GM10248 (cell line): ENCODE measurements at regions of chr3 and their contacts with region 1.

Region 1: DNA sequence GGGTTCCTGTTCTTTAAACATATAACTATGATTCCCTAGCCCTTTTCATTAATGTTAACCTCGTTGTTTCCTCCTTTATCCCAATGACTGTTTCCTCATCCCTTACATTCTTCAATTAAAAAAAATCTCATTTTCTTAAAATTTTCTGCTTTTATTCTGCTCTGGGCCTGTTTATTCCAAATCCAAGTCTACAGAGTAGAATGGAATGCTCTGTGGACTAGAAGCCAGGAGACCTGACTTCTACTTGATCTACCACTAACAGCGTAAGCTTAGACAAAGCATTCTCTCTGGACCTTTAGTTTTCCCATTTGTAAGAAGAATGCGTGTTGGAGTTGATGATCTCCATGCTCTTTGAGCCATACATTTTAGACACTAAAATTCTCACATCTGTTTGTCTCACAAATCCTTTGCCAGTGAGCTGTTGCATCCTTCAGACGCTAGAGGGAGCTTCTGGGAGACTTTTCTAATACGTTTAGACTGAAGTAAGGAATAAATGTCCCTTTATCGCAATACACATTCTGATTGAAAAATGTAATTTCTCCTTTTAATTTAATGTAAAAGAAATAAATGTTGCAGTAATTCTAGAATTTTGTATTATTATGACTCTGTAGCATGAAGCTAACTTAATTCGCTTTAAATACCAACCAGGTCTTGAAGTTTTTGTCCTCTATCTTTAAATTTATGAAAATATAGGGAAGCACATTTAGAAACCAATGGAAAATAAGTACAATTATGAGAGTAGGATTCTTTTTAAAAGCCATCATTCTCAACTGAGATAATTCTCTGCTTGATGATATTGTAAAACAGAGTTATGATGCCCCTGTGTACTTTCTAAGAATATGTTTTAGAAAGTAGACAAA is 21.7 kb upstream of the GMNC start:
- DNase-seq: peak; percentile 40
- CTCF ChIP-seq: peak; percentile 88

Region 2: DNA sequence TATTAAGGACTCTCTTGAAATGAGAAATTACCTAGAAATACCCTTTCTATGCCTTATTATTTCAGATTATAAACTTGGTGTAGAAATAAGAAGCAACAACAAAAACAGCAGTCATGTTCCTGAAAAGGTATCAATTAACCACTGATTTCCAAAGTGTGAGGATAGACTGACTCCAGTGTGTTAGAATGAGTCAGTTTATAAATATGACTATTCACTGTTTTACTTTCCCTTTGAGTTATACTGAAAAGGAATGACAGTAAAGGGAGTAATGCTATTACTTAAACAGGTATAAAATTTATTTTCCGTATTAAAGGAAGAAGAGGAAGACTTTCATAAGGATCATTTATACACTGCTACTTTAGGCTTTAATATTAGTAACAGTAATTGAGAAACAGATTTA is 34.6 kb before region 1 on chr3:
- CTCF ChIA-PET with region 1: no interaction called
- POLR2A ChIA-PET with region 1: no interaction called
- DNase-seq: no peak
- CTCF ChIP-seq: no peak

Region 3: DNA sequence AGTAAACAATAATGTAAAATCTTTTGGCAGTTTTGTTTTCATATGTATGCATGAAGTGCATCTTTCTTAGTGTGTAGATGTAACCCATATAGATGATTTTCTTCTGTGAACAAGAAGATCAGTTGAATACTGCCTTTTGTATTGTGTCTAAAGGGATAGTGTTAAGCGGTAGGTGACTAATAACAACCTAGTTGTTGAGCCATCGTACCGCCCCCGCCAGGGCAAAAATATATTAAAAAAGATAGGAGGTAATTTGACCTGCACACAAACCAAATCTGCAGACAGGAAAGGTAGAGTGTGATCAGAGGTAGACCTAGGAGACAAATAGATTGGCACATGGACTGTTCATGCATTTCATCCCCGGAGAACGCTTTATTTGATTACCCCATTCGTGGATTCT is 18.4 kb before region 1 on chr3:
- CTCF ChIA-PET with region 1: interaction called, 13 read pairs
- POLR2A ChIA-PET with region 1: no interaction called
- DNase-seq: no peak
- CTCF ChIP-seq: no peak

Region 4: DNA sequence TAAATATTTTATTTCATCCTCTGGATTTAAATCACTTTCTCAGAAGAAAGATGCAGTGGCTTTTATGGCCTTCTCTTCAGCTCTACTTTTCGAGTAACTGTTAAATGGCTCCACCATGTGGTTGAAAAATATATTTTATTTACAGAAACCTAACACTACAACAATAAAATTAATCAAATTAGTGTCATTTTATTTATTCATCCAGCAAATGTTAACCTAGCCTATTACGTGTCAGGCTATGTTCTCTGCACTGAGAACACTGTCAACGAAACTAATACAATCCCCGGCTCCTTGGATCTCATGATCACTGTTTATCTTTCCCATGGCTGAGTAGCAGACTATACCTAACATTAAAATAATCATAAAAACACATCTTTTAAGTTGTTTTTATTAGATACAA is 166.8 kb after region 1 on chr3:
- CTCF ChIA-PET with region 1: interaction called, 91 read pairs
- POLR2A ChIA-PET with region 1: no interaction called
- DNase-seq: peak; percentile 20
- CTCF ChIP-seq: peak; percentile 45